ENCODE measurements at regions of chr7 and their contacts with region 1.

Region 1: DNA sequence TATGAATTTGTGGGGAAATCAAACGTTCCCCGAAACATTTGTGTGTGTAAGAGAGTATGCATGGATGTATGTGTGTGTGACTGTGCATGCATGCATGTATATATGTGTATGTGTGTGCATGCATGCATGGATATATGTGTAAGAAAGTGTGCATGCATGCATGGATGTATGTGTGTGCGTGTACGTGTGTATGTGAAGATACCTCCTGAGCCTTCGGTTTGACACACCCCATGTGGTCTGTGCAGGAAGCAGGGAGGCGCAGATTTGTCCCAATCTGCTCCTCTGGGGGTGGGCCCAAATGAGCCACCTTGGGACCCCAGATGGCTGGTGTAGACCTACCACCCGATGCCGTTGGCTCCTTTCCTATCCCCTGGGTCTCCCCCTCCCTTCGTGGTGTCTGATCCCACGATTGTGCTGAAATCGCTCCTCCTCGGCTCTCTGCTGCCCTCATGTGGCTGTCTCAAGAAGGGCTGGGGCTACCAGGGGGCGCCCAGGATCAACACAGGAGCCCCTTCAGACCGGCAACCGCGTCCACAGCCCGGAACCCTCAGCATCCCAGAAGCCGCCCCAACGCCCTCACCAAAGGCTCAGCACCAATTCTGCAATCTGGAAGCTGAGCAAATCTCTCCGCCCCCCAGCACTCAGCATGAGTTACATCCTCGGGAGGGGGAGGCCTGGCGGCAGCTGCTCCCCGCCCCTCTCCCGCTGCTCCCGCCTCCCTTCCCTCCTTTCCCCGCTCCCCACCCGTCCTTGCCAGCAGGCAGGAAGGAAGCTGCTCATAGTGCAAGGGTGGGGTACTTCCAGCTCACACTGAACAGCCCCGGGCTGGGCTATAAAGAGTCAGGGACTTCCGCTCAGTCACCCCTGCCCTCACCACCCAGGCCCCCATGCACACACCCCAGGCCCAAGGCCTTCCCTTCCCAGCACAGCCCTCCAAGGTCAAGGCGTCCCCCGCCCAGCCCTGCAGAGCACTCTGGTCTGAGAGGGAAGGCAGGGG is 2.3 kb upstream of the NOS3 start:
- DNase-seq: peak; percentile 74
- ATAC-seq: peak; percentile 79
- H3K4me3 Mint-ChIP-seq: peak overlapping the region; percentile 34
- H3K27ac Mint-ChIP-seq: no peak overlapping the region
- H3K4me1 Mint-ChIP-seq: peaks cover 8% of the 10 kb centered on the region
- H3K27me3 Mint-ChIP-seq: peaks cover 39% of the 10 kb centered on the region

Region 2: GRCh38 chr7:150974468-150975391 is 13.8 kb before region 1 on chr7:
- CTCF ChIA-PET with region 1: interaction called, 31 read pairs
- DNase-seq: peak; percentile 83
- ATAC-seq: peak; percentile 87
- H3K4me3 Mint-ChIP-seq: peak overlapping the region; percentile 77
- H3K27ac Mint-ChIP-seq: peak overlapping the region; percentile 32
- H3K4me1 Mint-ChIP-seq: peaks cover 21% of the 10 kb centered on the region
- H3K27me3 Mint-ChIP-seq: peaks cover 33% of the 10 kb centered on the region

Region 3: GRCh38 chr7:151008511-151009323 is 20.2 kb after region 1 on chr7:
- CTCF ChIA-PET with region 1: interaction called, 38 read pairs
- DNase-seq: peak; percentile 89
- ATAC-seq: peak; percentile 73
- H3K4me3 Mint-ChIP-seq: peak overlapping the region; percentile 81
- H3K27ac Mint-ChIP-seq: peak overlapping the region; percentile 90
- H3K4me1 Mint-ChIP-seq: peaks cover 48% of the 10 kb centered on the region
- H3K27me3 Mint-ChIP-seq: no peaks in the 10 kb centered on the region

Region 4: GRCh38 chr7:151017953-151018420 is 29.5 kb after region 1 on chr7:
- CTCF ChIA-PET with region 1: interaction called, 12 read pairs
- DNase-seq: peak; percentile 84
- ATAC-seq: peak; percentile 64
- H3K4me3 Mint-ChIP-seq: peak overlapping the region; percentile 69
- H3K27ac Mint-ChIP-seq: peak overlapping the region; percentile 52
- H3K4me1 Mint-ChIP-seq: peaks cover 45% of the 10 kb centered on the region
- H3K27me3 Mint-ChIP-seq: peaks cover 39% of the 10 kb centered on the region

Region 5: DNA sequence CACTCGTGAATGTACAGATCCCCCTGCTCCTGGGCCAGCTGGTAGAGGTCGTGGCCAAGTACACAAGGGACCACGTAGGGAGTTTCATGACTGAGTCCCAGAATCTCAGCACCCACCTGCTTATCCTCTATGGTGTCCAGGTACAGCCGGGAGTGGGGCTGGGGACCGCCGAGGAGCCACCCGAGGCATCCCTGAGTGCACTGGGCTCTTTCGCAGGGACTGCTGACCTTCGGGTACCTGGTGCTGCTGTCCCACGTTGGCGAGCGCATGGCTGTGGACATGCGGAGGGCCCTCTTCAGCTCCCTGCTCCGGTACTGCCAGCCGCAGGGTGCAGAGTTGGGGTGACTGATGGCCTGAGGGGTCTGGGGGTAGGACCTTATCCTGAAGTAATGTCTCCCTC is 45.8 kb after region 1 on chr7:
- CTCF ChIA-PET with region 1: no interaction called
- DNase-seq: no peak
- ATAC-seq: no peak
- H3K4me3 Mint-ChIP-seq: no peak overlapping the region
- H3K27ac Mint-ChIP-seq: no peak overlapping the region
- H3K4me1 Mint-ChIP-seq: peaks cover 14% of the 10 kb centered on the region
- H3K27me3 Mint-ChIP-seq: no peaks in the 10 kb centered on the region